Breast epithelium (tissue), 4 donors: ENCODE measurements at regions of chr20 and their contacts with region 1.

Region 1: DNA sequence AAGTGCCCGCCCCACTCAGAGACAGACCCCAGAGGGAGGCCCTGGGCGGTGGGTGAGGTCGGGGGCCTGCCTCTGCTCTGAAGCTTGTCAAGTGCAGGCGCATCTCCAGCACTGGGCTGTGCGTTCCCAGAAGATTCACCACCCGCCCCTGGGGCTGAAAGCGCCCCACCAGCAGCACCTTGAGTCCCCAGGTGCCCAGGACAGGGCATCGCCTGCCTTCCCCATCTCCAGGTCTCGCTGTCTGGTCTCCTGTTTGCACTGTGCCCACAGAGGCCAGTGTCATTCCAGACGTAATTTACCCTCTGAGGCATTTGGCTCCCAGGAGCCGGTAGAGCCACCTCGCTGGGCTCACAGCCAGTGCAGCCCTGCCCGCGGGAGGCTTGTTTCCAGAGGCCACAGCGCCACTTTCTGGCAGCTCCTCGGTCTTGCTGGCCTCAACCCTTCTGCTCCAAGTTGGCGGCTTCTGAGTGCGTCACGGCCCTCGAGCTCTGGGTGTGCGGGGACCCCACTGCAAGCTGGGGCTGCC is 191.1 kb downstream of the TAF4 start:
- DNase-seq: peak; percentile 62 to 65
- H3K4me3 ChIP-seq: no peak overlapping the region
- H3K27ac ChIP-seq: no peak overlapping the region
- H3K4me1 ChIP-seq: no peaks in the 10 kb centered on the region
- H3K27me3 ChIP-seq: peaks cover 0 to 21% of the 10 kb centered on the region in 2 donors
- CTCF ChIP-seq: peak in 1 of 3 donors; percentile 38
- POLR2A ChIP-seq: no peak

Region 2: DNA sequence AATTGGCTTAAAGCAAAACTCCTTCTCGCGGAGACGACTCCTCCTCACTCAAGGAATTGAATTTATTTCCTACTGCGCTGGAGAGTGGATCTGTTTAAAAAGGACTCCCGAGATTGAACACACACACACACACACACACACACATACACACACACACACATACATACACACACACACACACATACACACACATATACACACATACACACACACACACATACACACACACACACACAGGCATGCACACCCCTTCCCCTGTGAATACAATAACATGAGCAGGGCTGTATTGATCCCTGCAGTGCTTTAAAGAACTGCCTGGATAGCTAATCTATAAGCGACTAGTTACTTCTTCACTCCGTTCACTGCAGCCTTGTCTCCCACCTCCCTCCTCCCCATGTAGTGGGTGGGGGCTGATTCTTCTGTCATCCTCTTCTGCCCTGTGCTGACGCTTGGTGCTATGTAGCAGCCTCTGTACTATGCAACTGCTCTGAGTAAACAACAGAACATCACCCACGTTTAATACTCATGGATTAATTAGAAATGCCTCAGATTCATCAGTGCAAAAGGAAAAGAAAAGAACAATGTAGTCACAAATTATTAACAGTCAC is 1367.4 kb before region 1 on chr20:
- intact Hi-C with region 1: loop called (anchors 5 kb)
- DNase-seq: no peak
- H3K4me3 ChIP-seq: no peak overlapping the region
- H3K27ac ChIP-seq: no peak overlapping the region
- H3K4me1 ChIP-seq: no peaks in the 10 kb centered on the region
- H3K27me3 ChIP-seq: no peaks in the 10 kb centered on the region
- CTCF ChIP-seq: no peak
- POLR2A ChIP-seq: no peak

Region 3: GRCh38 chr20:61414455-61414991 is 460.0 kb before region 1 on chr20:
- intact Hi-C with region 1: no loop called
- DNase-seq: no peak
- H3K4me3 ChIP-seq: no peak overlapping the region
- H3K27ac ChIP-seq: no peak overlapping the region
- H3K4me1 ChIP-seq: no peaks in the 10 kb centered on the region
- H3K27me3 ChIP-seq: no peaks in the 10 kb centered on the region
- CTCF ChIP-seq: no peak
- POLR2A ChIP-seq: no peak

Region 4: GRCh38 chr20:61786230-61786629 is 88.3 kb before region 1 on chr20:
- intact Hi-C with region 1: no loop called
- DNase-seq: no peak
- H3K4me3 ChIP-seq: no peak overlapping the region
- H3K27ac ChIP-seq: no peak overlapping the region
- H3K4me1 ChIP-seq: no peaks in the 10 kb centered on the region
- H3K27me3 ChIP-seq: no peaks in the 10 kb centered on the region
- CTCF ChIP-seq: no peak
- POLR2A ChIP-seq: no peak

Region 5: GRCh38 chr20:62066983-62067433 is 192.4 kb after region 1 on chr20:
- intact Hi-C with region 1: no loop called
- DNase-seq: peak in 1 of 2 donors; percentile 40
- H3K4me3 ChIP-seq: peak overlapping the region; percentile 63 to 79 (median 72)
- H3K27ac ChIP-seq: peak overlapping the region; percentile 91 to 99
- H3K4me1 ChIP-seq: peaks cover 0 to 17% of the 10 kb centered on the region in 2 donors
- H3K27me3 ChIP-seq: no peaks in the 10 kb centered on the region
- CTCF ChIP-seq: no peak
- POLR2A ChIP-seq: no peak